Caco-2 (cell line): ENCODE measurements at regions of chr5 and their contacts with region 1.

Region 1: GRCh38 chr5:77129391-77129990 is 42.4 kb upstream of the ZBED3 start:
- DNase-seq: peak; percentile 50 to 63
- H3K4me3 ChIP-seq: no peak overlapping the region
- H3K4me3 Mint-ChIP-seq: no peak overlapping the region
- H3K27ac Mint-ChIP-seq: no peak overlapping the region
- H3K4me1 ChIP-seq: no peaks in the 10 kb centered on the region
- H3K4me1 Mint-ChIP-seq: no peaks in the 10 kb centered on the region
- H3K27me3 ChIP-seq: no peaks in the 10 kb centered on the region
- H3K27me3 Mint-ChIP-seq: no peaks in the 10 kb centered on the region
- CTCF ChIP-seq: peak; percentile 59 to 63

Region 2: GRCh38 chr5:77086689-77087483 is 42.6 kb before region 1 on chr5 and contains the start of gene ZBED3:
- CTCF ChIA-PET with region 1: no interaction called
- POLR2A ChIA-PET with region 1: no interaction called
- intact Hi-C with region 1: loop called (anchors 1 kb)
- DNase-seq: peak; percentile 77 to 84
- H3K4me3 ChIP-seq: peak within 1 kb of the TSS; percentile 71
- H3K4me3 Mint-ChIP-seq: peak within 1 kb of the TSS; percentile 99
- H3K27ac Mint-ChIP-seq: peak within 1 kb of the TSS; percentile 100
- H3K4me1 ChIP-seq: peaks cover 15% of the 10 kb centered on the region
- H3K4me1 Mint-ChIP-seq: peaks cover 6% of the 10 kb centered on the region
- H3K27me3 ChIP-seq: no peaks in the 10 kb centered on the region
- H3K27me3 Mint-ChIP-seq: no peaks in the 10 kb centered on the region
- CTCF ChIP-seq: peak; percentile 21 to 57
- total RNA-seq, gene ZBED3: 38.5 and 38.8 TPM in 2 replicates

Region 3: GRCh38 chr5:77491783-77492652 is 362.5 kb after region 1 on chr5 and contains the start of gene WDR41:
- CTCF ChIA-PET with region 1: interaction called, 10 read pairs
- POLR2A ChIA-PET with region 1: interaction called, 3 read pairs
- intact Hi-C with region 1: loop called (anchors 1 kb)
- DNase-seq: peak; percentile 89 to 91
- H3K4me3 ChIP-seq: peak within 1 kb of the TSS; percentile 81
- H3K4me3 Mint-ChIP-seq: peak within 1 kb of the TSS; percentile 97
- H3K27ac Mint-ChIP-seq: peak within 1 kb of the TSS; percentile 99
- H3K4me1 ChIP-seq: no peaks in the 10 kb centered on the region
- H3K4me1 Mint-ChIP-seq: no peaks in the 10 kb centered on the region
- H3K27me3 ChIP-seq: no peaks in the 10 kb centered on the region
- H3K27me3 Mint-ChIP-seq: peaks cover 13% of the 10 kb centered on the region
- CTCF ChIP-seq: peak; percentile 90 to 91
- total RNA-seq, gene WDR41: 64.1 and 66.2 TPM in 2 replicates